Naive thymus-derived CD4-positive, alpha-beta T cell (primary cell): ENCODE measurements at regions of chr3 and their contacts with region 1.

Region 1: GRCh38 chr3:38039101-38039898 is at the start of gene DLEC1:
- DNase-seq: peak; percentile 56 to 86 (median 83)
- ATAC-seq: peak; percentile 72
- H3K4me3 ChIP-seq: peak within 1 kb of the TSS; percentile 62
- H3K4me3 Mint-ChIP-seq: peak within 1 kb of the TSS; percentile 71 to 92 (median 88)
- H3K27ac ChIP-seq: peak within 1 kb of the TSS; percentile 62
- H3K27ac Mint-ChIP-seq: peak within 1 kb of the TSS; percentile 89 to 97 (median 92)
- H3K4me1 ChIP-seq: peaks cover 8 to 26% of the 10 kb centered on the region in 2 donors
- H3K4me1 Mint-ChIP-seq: peaks cover 20 to 37% (median 32%) of the 10 kb centered on the region in 7 donors
- H3K27me3 ChIP-seq: no peaks in the 10 kb centered on the region
- H3K27me3 Mint-ChIP-seq: peaks cover 0 to 7% (median 0%) of the 10 kb centered on the region in 5 donors
- total RNA-seq, gene DLEC1: 1.5 to 9.4 (median 7.5) TPM

Region 2: DNA sequence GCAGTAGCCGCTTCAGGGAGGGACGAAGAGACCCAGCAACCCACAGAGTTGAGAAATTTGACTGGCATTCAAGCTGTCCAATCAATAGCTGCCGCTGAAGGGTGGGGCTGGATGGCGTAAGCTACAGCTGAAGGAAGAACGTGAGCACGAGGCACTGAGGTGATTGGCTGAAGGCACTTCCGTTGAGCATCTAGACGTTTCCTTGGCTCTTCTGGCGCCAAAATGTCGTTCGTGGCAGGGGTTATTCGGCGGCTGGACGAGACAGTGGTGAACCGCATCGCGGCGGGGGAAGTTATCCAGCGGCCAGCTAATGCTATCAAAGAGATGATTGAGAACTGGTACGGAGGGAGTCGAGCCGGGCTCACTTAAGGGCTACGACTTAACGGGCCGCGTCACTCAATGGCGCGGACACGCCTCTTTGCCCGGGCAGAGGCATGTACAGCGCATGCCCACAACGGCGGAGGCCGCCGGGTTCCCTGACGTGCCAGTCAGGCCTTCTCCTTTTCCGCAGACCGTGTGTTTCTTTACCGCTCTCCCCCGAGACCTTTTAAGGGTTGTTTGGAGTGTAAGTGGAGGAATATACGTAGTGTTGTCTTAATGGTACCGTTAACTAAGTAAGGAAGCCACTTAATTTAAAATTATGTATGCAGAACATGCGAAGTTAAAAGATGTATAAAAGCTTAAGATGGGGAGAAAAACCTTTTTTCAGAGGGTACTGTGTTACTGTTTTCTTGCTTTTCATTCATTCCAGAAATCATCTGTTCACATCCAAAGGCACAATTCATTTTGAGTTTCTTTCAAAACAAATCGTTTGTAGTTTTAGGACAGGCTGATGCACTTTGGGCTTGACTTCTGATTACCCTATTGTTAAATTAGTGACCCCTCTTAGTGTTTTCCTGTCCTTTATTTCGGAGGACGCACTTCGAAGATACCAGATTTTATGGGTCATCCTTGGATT is 1045.7 kb before region 1 on chr3 and contains the start of gene MLH1:
- CTCF ChIA-PET with region 1: no interaction called
- POLR2A ChIA-PET with region 1: interaction called, 3 read pairs
- intact Hi-C with region 1: loop called in 1 of 2 experiments (anchors 2 kb)
- DNase-seq: peak; percentile 91 to 100 (median 99)
- ATAC-seq: peak; percentile 90
- H3K4me3 ChIP-seq: peak within 1 kb of the TSS; percentile 80
- H3K4me3 Mint-ChIP-seq: peak within 1 kb of the TSS in 1 of 10 donors; percentile 26
- H3K27ac ChIP-seq: peak within 1 kb of the TSS; percentile 83
- H3K27ac Mint-ChIP-seq: no peak within 1 kb of the TSS
- H3K4me1 ChIP-seq: peaks cover 36 to 40% of the 10 kb centered on the region in 2 donors
- H3K4me1 Mint-ChIP-seq: peaks cover 23 to 43% (median 38%) of the 10 kb centered on the region in 7 donors
- H3K27me3 ChIP-seq: no peaks in the 10 kb centered on the region
- H3K27me3 Mint-ChIP-seq: no peaks in the 10 kb centered on the region
- total RNA-seq, gene MLH1: 26.4 to 42.0 (median 31.7) TPM

Region 3: GRCh38 chr3:37996785-37997301 is 42.5 kb before region 1 on chr3:
- CTCF ChIA-PET with region 1: interaction called, 7 read pairs
- POLR2A ChIA-PET with region 1: interaction called, 6 read pairs
- intact Hi-C with region 1: loop called (anchors 2 kb)
- DNase-seq: peak; percentile 59 to 82 (median 76)
- ATAC-seq: peak; percentile 78
- H3K4me3 ChIP-seq: no peak overlapping the region
- H3K4me3 Mint-ChIP-seq: peak overlapping the region in 9 of 10 donors; percentile 47 to 83 (median 71)
- H3K27ac ChIP-seq: no peak overlapping the region
- H3K27ac Mint-ChIP-seq: peak overlapping the region; percentile 80 to 97 (median 96)
- H3K4me1 ChIP-seq: peaks cover 47 to 48% of the 10 kb centered on the region in 2 donors
- H3K4me1 Mint-ChIP-seq: peaks cover 39 to 69% (median 62%) of the 10 kb centered on the region in 7 donors
- H3K27me3 ChIP-seq: no peaks in the 10 kb centered on the region
- H3K27me3 Mint-ChIP-seq: no peaks in the 10 kb centered on the region

Region 4: DNA sequence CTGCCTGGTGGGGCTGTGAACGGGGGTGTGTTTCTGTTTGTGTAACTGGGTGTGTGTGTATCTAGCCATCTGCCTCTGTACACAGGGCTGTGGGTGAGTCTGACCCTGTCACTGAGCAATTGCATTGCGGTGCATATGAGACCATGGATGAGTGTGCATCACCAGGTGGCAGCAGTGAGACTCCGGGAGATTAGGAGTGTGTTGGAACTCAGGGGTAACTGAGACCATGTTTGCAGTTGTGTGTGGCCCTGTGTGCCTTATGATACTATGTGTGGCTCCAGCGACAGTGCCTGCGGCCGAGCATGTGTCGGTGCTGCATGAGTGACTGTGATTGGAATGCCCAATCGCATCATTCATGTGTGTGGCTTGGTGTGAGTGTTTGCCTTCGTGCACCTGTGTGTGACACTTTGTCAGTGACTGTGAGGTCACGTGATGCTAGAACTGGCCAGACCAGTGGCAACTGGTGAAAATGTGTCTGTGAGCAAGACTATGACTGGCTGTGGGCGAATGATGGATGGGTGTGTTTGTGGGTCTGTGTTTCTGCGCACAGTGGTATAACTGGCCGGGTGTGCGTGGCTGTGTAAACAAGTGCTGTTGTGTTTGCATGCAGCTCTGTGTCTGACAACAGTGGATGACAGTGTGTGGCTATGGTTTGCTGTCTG is 34.8 kb before region 1 on chr3:
- CTCF ChIA-PET with region 1: interaction called, 8 read pairs
- POLR2A ChIA-PET with region 1: interaction called, 5 read pairs
- intact Hi-C with region 1: loop called (anchors 1 kb)
- DNase-seq: peak in 5 of 9 donors; percentile 29 to 46 (median 34)
- ATAC-seq: peak; percentile 64
- H3K4me3 ChIP-seq: no peak overlapping the region
- H3K4me3 Mint-ChIP-seq: no peak overlapping the region
- H3K27ac ChIP-seq: peak overlapping the region; percentile 29
- H3K27ac Mint-ChIP-seq: peak overlapping the region; percentile 1 to 83 (median 82)
- H3K4me1 ChIP-seq: no peaks in the 10 kb centered on the region
- H3K4me1 Mint-ChIP-seq: peaks cover 17 to 25% (median 22%) of the 10 kb centered on the region in 7 donors
- H3K27me3 ChIP-seq: no peaks in the 10 kb centered on the region
- H3K27me3 Mint-ChIP-seq: no peaks in the 10 kb centered on the region

Region 5: DNA sequence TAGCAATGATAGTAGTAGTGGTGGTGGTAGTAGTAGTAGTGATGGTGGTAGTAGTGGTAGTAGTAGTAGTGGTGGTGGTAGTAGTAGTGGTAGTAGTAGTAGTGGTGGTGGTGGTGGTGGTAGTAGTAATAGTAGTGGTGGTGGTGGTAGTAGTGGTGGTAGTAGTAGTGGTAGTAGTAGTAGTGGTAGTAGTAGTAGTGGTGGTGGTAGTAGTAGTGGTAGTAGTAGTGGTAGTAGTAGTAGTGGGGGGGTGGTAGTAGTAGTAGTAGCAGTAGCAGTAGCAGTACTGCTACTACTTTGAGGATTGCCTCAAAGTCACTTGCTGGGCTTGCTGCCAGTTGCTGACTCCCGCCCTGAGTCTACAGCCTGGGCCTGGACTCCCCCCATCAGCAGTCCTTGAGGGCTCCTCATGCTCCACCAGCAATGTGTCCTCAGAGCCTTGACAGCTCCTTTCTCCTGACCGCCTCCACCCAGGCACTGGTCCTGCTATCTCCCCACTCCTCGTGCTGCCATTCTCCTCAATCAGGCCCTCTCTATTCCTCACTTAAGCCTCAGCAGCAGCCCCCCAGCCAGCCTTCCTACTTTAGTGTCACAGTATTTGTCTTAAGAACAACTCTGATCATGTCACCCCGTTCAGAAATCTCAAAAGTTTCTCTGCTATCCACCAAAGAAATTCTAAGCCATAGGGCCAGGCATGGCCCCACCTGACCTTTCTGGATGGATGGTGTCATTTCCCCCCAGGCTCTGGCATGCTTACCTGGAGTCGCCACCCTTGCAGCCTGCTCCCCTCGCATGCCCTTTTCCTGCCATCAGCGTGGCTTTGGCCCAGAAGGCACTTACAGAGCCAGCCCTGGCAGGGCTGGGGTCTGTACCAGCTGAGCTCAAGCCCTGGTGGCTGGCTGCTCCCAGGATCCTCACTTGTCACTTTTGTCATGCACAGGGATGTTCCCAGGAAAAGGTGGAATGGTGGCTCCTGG is 45.3 kb after region 1 on chr3:
- CTCF ChIA-PET with region 1: no interaction called
- POLR2A ChIA-PET with region 1: no interaction called
- intact Hi-C with region 1: loop called in 1 of 2 experiments (anchors 2 kb)
- DNase-seq: peak in 7 of 9 donors; percentile 22 to 69 (median 56)
- ATAC-seq: peak; percentile 61
- H3K4me3 ChIP-seq: no peak overlapping the region
- H3K4me3 Mint-ChIP-seq: peak overlapping the region in 5 of 10 donors; percentile 1 to 52 (median 14)
- H3K27ac ChIP-seq: no peak overlapping the region
- H3K27ac Mint-ChIP-seq: peak overlapping the region; percentile 54 to 92 (median 80)
- H3K4me1 ChIP-seq: no peaks in the 10 kb centered on the region
- H3K4me1 Mint-ChIP-seq: no peaks in the 10 kb centered on the region
- H3K27me3 ChIP-seq: no peaks in the 10 kb centered on the region
- H3K27me3 Mint-ChIP-seq: no peaks in the 10 kb centered on the region